HepG2 (cell line): ENCODE measurements at regions of chr5 and their contacts with region 1.

Region 1: GRCh38 chr5:177113566-177114424 is 19.8 kb upstream of the NSD1 start:
- DNase-seq: peak; percentile 62
- ATAC-seq: peak; percentile 52
- H3K4me3 ChIP-seq: peak overlapping the region in 1 of 3 experiments; percentile 58; a peak in 1 of 6 replicates
- H3K27ac ChIP-seq: no peak overlapping the region
- H3K4me1 ChIP-seq: peaks cover 57% of the 10 kb centered on the region
- H3K27me3 ChIP-seq: no peaks in the 10 kb centered on the region
- CTCF ChIP-seq: peak; percentile 95
- EP300 ChIP-seq: no peak
- POLR2A ChIP-seq: no peak
- RAD21 ChIP-seq: peak; percentile 85

Region 2: GRCh38 chr5:176458904-176459561 is 654.8 kb before region 1 on chr5:
- CTCF ChIA-PET with region 1: no interaction called
- POLR2A ChIA-PET with region 1: no interaction called
- in situ Hi-C with region 1: no loop called
- intact Hi-C with region 1: no loop called
- DNase-seq: no peak
- ATAC-seq: no peak
- H3K4me3 ChIP-seq: no peak overlapping the region
- H3K27ac ChIP-seq: no peak overlapping the region
- H3K4me1 ChIP-seq: no peaks in the 10 kb centered on the region
- H3K27me3 ChIP-seq: no peaks in the 10 kb centered on the region
- CTCF ChIP-seq: no peak
- EP300 ChIP-seq: no peak
- POLR2A ChIP-seq: no peak
- RAD21 ChIP-seq: no peak

Region 3: DNA sequence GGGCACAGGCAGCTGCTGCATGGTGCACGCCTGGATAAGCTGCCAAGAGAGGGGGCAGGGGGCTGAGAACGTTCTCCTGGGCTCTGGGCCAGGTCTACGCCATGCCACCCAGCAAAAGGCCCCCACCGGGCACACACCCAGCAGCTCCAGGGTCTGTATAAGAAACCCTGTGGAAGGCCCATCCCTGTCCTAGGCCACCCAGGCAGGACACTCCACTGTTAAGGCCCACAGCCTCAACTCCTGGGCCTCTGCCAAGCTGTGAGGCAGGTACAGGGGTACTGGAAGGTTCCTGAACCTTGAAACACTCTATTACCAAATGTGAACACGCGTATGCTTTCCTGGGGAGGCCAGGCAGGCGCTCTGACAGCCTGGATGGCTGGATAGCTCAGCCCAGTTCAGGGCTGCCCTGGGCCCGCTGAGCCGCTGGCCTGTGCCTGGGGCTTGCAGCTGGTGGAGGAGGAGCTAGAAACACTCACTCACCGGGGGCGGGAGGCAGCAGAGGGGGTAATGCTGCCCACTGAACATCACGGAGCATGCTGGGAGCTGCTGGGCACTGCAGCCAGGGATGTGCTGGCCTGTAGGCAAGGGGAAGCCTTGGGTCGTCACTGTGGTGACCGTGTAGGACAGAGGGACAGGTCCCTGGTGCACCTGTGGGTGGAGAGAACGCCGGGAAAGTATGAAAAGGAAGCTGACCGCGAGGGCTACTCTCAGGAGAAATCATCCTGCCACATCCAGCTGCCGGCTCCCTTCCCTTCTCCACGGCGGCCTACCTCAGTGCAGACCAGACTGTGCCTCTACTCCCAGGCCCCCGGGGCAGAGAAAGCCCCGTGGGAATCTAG is 582.6 kb before region 1 on chr5:
- CTCF ChIA-PET with region 1: no interaction called
- POLR2A ChIA-PET with region 1: no interaction called
- in situ Hi-C with region 1: no loop called
- intact Hi-C with region 1: no loop called
- DNase-seq: no peak
- ATAC-seq: no peak
- H3K4me3 ChIP-seq: no peak overlapping the region
- H3K27ac ChIP-seq: no peak overlapping the region
- H3K4me1 ChIP-seq: peaks cover 25% of the 10 kb centered on the region
- H3K27me3 ChIP-seq: no peaks in the 10 kb centered on the region; a peak in 1 of 5 replicates
- CTCF ChIP-seq: no peak
- EP300 ChIP-seq: no peak
- POLR2A ChIP-seq: no peak
- RAD21 ChIP-seq: no peak

Region 4: GRCh38 chr5:176660860-176661641 is 452.7 kb before region 1 on chr5:
- CTCF ChIA-PET with region 1: no interaction called
- POLR2A ChIA-PET with region 1: no interaction called
- in situ Hi-C with region 1: no loop called
- intact Hi-C with region 1: no loop called
- DNase-seq: peak; percentile 65
- ATAC-seq: peak; percentile 84
- H3K4me3 ChIP-seq: no peak overlapping the region; a peak in 1 of 6 replicates
- H3K27ac ChIP-seq: no peak overlapping the region
- H3K4me1 ChIP-seq: peaks cover 14% of the 10 kb centered on the region
- H3K27me3 ChIP-seq: peaks cover 5 to 7% of the 10 kb centered on the region in 2 experiments; a peak in 4 of 5 replicates
- CTCF ChIP-seq: peak; percentile 97
- EP300 ChIP-seq: no peak
- POLR2A ChIP-seq: no peak
- RAD21 ChIP-seq: peak; percentile 93

Region 5: GRCh38 chr5:177071666-177072385 is 42.0 kb before region 1 on chr5:
- CTCF ChIA-PET with region 1: interaction called, 54 read pairs
- POLR2A ChIA-PET with region 1: interaction called, 13 read pairs
- in situ Hi-C with region 1: loop called (anchors 5 kb)
- intact Hi-C with region 1: loop called (anchors 1 kb)
- DNase-seq: peak; percentile 86
- ATAC-seq: peak; percentile 91
- H3K4me3 ChIP-seq: no peak overlapping the region
- H3K27ac ChIP-seq: no peak overlapping the region
- H3K4me1 ChIP-seq: peaks cover 16% of the 10 kb centered on the region
- H3K27me3 ChIP-seq: no peaks in the 10 kb centered on the region
- CTCF ChIP-seq: peak; percentile 87
- EP300 ChIP-seq: no peak
- POLR2A ChIP-seq: no peak
- RAD21 ChIP-seq: peak; percentile 73

Region 6: DNA sequence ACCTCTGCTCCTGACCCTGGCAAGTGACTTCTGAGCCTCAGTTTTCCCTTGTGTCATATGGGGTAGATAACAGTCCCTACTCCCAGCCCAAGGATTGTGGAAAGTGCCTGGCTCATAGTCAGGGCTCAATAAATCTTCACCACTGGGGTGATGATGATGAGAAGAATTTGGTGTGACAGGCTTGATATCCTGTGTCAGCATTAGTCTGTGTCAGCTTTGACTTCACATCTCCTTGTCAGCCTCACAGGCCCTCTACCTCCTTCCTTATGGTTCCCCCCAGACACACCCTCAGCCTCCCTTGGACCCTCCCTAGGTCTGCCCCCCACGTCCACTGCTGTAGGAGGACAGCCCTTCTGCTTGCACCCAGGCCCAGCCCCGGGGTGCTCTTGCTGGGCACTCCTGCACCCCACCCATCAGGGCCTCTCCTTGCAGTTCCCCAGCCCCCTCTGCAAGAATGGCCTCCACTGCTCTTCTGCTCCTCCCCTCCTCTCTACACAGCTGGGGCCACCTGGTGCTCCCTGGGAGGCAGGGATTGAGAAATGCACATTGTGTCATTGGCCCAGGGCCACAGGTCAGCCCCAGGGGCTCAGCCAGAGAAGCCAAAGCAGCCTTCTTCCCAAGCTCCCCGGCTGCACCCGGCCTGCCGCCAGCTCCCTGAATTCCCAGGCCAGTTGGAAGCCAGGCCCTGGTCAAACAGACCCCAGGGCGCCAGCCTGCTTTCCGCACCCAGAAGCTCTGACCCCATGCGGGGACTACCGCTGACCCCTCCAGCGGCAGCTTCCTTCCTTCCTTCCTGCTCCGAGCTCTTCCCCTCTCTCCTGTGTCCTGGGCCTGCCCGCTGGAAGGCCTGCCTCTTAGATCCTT is 19.3 kb before region 1 on chr5:
- CTCF ChIA-PET with region 1: no interaction called
- POLR2A ChIA-PET with region 1: interaction called, 293 read pairs
- in situ Hi-C with region 1: no loop called
- intact Hi-C with region 1: no loop called
- DNase-seq: peak; percentile 86
- ATAC-seq: peak; percentile 59
- H3K4me3 ChIP-seq: no peak overlapping the region
- H3K27ac ChIP-seq: peak overlapping the region; percentile 67
- H3K4me1 ChIP-seq: peaks cover 100% of the 10 kb centered on the region
- H3K27me3 ChIP-seq: no peaks in the 10 kb centered on the region
- CTCF ChIP-seq: peak; percentile 61
- EP300 ChIP-seq: peak in 1 of 2 experiments; percentile 71; a peak in 2 of 4 replicates
- POLR2A ChIP-seq: no peak
- RAD21 ChIP-seq: peak; percentile 50; the same call in 1 of the 2 replicates

Region 7: GRCh38 chr5:177133091-177133852 is 19.5 kb after region 1 on chr5 and contains the start of gene NSD1:
- CTCF ChIA-PET with region 1: no interaction called
- POLR2A ChIA-PET with region 1: no interaction called
- in situ Hi-C with region 1: no loop called
- intact Hi-C with region 1: no loop called
- DNase-seq: no peak
- ATAC-seq: no peak
- H3K4me3 ChIP-seq: peak within 1 kb of the TSS in 2 of 3 experiments; percentile 16 to 23; a peak in 1 of 6 replicates
- H3K27ac ChIP-seq: no peak within 1 kb of the TSS
- H3K4me1 ChIP-seq: no peaks in the 10 kb centered on the region
- H3K27me3 ChIP-seq: peaks cover 0 to 11% of the 10 kb centered on the region in 2 experiments; a peak in 2 of 5 replicates
- CTCF ChIP-seq: no peak
- EP300 ChIP-seq: no peak
- POLR2A ChIP-seq: no peak
- RAD21 ChIP-seq: no peak
- total RNA-seq, gene NSD1: 0.09 and 0.18 TPM in 2 replicates

Region 8: DNA sequence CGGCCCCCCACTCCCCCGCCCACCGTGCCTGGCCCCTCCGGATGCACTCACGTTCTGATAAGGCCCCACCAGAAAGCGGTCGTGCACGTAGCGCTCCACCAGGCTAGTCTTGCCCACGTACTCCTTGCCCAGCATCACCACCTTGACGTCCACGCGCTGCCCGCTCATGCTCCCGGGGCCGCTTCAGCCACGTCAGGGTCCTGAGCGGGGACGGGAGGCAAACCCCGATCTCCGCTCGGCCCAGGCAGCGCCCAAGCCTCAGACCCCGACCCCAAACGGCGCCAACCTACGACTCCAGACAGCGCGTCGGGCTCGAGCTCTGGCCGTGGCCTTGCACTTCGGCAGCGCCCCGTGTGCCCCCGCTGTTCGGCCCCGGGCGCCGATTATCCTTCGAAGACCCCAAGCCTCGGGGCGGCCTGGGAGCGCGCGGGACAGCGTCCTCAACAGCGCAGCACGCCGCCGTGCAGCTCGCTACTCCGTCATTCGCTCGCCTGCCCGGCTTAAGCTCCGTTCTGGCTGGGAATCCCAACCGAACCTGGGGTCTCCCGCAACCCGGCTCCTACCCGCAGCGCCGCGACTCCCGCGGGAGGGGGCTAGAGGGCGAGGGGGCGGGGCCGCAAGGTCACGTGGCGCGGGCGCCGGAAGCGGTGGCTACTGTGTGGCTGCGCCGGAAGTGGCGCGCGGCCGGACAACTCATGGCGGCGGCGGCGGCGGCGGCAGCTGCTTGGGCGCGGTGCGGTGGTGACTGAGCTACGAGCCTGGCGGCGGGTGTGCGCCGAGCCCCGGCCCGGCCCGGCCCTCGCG is 189.5 kb after region 1 on chr5 and contains the starts of genes PRELID1 and RAB24:
- CTCF ChIA-PET with region 1: no interaction called
- POLR2A ChIA-PET with region 1: interaction called, 4 read pairs
- in situ Hi-C with region 1: loop called (anchors 5 kb)
- intact Hi-C with region 1: loop called (anchors 2 kb)
- DNase-seq: peak; percentile 67
- ATAC-seq: peak; percentile 73
- H3K4me3 ChIP-seq: peak within 1 kb of the TSS; percentile 76 to 97 (median 85)
- H3K27ac ChIP-seq: peak within 1 kb of the TSS; percentile 78
- H3K4me1 ChIP-seq: peaks cover 30% of the 10 kb centered on the region
- H3K27me3 ChIP-seq: no peaks in the 10 kb centered on the region; a peak in 1 of 5 replicates
- CTCF ChIP-seq: peak; percentile 62
- EP300 ChIP-seq: no peak
- POLR2A ChIP-seq: peak in 1 of 2 experiments; percentile 55; a peak in 1 of 4 replicates
- RAD21 ChIP-seq: 0 out of 2 replicates have a peak, but pooled peaks have one; percentile 17
- total RNA-seq, gene PRELID1: 239 and 271 TPM in 2 replicates
- total RNA-seq, gene RAB24: 15.4 and 22.9 TPM in 2 replicates